IMR-90 (cell line): ENCODE measurements at regions of chr1 and their contacts with region 1.

Region 1: DNA sequence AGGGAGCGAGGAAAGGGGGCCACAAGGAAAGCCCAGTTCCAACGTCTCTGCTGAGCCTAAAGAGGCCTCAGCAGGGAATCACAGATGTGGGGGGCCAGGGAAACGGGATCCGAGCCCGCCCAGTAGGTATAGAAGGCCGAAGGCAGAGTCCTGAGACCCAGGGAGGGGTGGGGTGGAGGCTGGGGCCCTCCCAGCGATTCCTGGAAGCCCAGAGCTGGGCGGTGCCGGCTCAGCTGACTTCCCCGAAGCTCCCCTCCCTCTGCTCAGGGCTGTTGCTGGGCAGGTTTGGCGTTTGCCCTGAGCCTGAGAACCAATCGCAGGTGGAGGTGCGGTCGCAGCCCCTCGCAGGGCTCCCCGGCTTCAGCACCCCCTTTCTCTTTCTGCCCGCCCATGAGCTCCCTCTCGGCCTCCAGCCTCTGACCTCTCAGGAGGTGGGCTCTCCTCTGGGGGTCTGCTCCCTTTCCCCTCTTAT is 12.8 kb downstream of the ADAMTSL4 start:
- DNase-seq: peak; percentile 91
- ATAC-seq: peak; percentile 58
- H3K4me3 ChIP-seq: peak overlapping the region; percentile 24
- H3K27ac ChIP-seq: peak overlapping the region; percentile 96
- H3K4me1 ChIP-seq: peaks cover 31% of the 10 kb centered on the region
- H3K27me3 ChIP-seq: no peaks in the 10 kb centered on the region
- CTCF ChIP-seq: no peak
- POLR2A ChIP-seq: peak; percentile 46
- RAD21 ChIP-seq: no peak

Region 2: GRCh38 chr1:150366416-150367296 is 195.4 kb before region 1 on chr1:
- CTCF ChIA-PET with region 1: no interaction called
- POLR2A ChIA-PET with region 1: no interaction called
- dilution Hi-C with region 1: no loop called
- in situ Hi-C with region 1: no loop called
- intact Hi-C with region 1: no loop called
- DNase-seq: peak; percentile 48
- ATAC-seq: no peak
- H3K4me3 ChIP-seq: peak overlapping the region; percentile 59
- H3K27ac ChIP-seq: peak overlapping the region; percentile 15; the same call in 1 of the 2 replicates
- H3K4me1 ChIP-seq: no peaks in the 10 kb centered on the region
- H3K27me3 ChIP-seq: no peaks in the 10 kb centered on the region
- CTCF ChIP-seq: no peak
- POLR2A ChIP-seq: no peak
- RAD21 ChIP-seq: no peak

Region 3: DNA sequence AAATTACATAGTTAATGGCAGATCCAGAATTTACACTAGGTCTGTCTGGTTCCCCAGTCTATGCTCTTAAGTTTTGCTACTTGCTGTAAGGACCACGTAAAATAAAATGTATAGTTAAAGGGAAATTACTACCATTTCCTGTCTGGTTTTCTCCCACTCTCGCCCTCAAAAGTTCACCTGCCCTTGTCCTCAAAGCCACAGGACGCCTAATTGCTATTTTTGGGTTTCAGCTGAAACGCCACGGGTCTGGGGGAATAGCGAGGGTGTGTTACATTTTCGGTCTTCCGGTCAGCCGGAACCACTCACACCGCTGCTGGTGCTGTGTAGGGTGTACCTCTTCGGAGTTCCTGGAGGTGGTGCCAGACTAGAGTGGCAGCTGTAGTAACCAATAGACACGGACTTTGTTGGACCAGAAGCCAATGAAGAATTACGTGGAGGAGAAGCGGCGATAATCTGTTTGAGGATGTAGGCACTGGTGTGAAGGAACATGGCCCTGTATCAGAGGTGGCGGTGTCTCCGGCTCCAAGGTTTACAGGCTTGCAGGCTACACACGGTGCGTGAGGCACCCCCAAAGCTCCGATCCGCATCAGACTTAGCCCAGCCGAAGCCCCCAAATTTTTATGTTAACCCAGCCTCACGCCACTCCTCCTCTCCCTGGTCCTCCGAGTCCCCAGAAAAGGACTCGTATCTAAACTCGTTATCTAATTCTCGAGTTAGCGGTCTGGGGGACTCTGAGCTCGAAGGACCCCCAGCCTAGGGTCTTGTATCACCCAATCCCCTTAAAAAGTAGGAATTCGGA is 74.8 kb before region 1 on chr1 and contains the start of gene TARS2:
- CTCF ChIA-PET with region 1: no interaction called
- POLR2A ChIA-PET with region 1: no interaction called
- dilution Hi-C with region 1: no loop called
- in situ Hi-C with region 1: no loop called
- intact Hi-C with region 1: loop called (anchors 5 kb)
- DNase-seq: peak; percentile 99
- ATAC-seq: peak; percentile 100
- H3K4me3 ChIP-seq: peak within 1 kb of the TSS; percentile 66
- H3K27ac ChIP-seq: peak within 1 kb of the TSS; percentile 78
- H3K4me1 ChIP-seq: no peaks in the 10 kb centered on the region; the same call in 1 of the 2 replicates
- H3K27me3 ChIP-seq: no peaks in the 10 kb centered on the region
- CTCF ChIP-seq: 0 out of 2 replicates have a peak, but pooled peaks have one; percentile 12
- POLR2A ChIP-seq: peak; percentile 52; the same call in 1 of the 2 replicates
- RAD21 ChIP-seq: no peak
- total RNA-seq, gene TARS2: 10.9 and 12.2 TPM in 2 replicates

Region 4: GRCh38 chr1:150621497-150622302 is 59.7 kb after region 1 on chr1:
- CTCF ChIA-PET with region 1: interaction called, 17 read pairs
- POLR2A ChIA-PET with region 1: interaction called, 9 read pairs
- dilution Hi-C with region 1: no loop called
- in situ Hi-C with region 1: no loop called
- intact Hi-C with region 1: loop called (anchors 1 kb)
- DNase-seq: peak; percentile 79
- ATAC-seq: peak; percentile 57
- H3K4me3 ChIP-seq: no peak overlapping the region
- H3K27ac ChIP-seq: no peak overlapping the region; the same call in 1 of the 2 replicates
- H3K4me1 ChIP-seq: peaks cover 10% of the 10 kb centered on the region
- H3K27me3 ChIP-seq: no peaks in the 10 kb centered on the region
- CTCF ChIP-seq: peak; percentile 79
- POLR2A ChIP-seq: no peak
- RAD21 ChIP-seq: peak; percentile 66

Region 5: DNA sequence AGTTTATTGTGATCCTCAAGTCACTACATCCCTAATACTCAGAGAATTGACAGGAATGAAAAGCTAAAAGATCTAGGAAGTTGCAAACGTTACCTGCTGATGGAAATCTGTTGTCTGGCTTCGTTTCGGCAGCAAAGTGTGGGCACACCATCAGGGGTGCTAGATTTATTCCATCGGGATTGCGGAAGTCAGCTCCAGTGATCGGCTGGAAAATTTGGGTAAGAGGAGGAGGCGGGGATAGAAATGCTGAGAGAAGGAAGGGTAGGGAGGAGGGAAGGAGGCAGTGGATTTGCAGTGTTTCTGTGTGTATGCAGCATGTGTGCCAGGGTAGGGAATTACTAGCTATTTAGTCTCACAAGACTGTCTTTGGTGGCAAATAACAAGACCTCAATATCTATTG is 246.1 kb after region 1 on chr1 and contains the start of gene CTSK:
- CTCF ChIA-PET with region 1: interaction called, 3 read pairs
- POLR2A ChIA-PET with region 1: no interaction called
- dilution Hi-C with region 1: no loop called
- in situ Hi-C with region 1: loop called (anchors 10 kb)
- intact Hi-C with region 1: loop called (anchors 1 kb)
- DNase-seq: no peak
- ATAC-seq: no peak
- H3K4me3 ChIP-seq: no peak within 1 kb of the TSS
- H3K27ac ChIP-seq: peak within 1 kb of the TSS; percentile 3; the same call in 1 of the 2 replicates
- H3K4me1 ChIP-seq: peaks cover 10% of the 10 kb centered on the region
- H3K27me3 ChIP-seq: no peaks in the 10 kb centered on the region
- CTCF ChIP-seq: no peak
- POLR2A ChIP-seq: no peak
- RAD21 ChIP-seq: no peak
- total RNA-seq, gene CTSK: 4.7 and 7.7 TPM in 2 replicates

Region 6: GRCh38 chr1:150876119-150876454 is 314.1 kb after region 1 on chr1:
- CTCF ChIA-PET with region 1: no interaction called
- POLR2A ChIA-PET with region 1: no interaction called
- dilution Hi-C with region 1: no loop called
- in situ Hi-C with region 1: no loop called
- intact Hi-C with region 1: loop called (anchors 5 kb)
- DNase-seq: peak; percentile 49
- ATAC-seq: peak; percentile 64
- H3K4me3 ChIP-seq: peak overlapping the region; percentile 77
- H3K27ac ChIP-seq: peak overlapping the region; percentile 94
- H3K4me1 ChIP-seq: peaks cover 11% of the 10 kb centered on the region
- H3K27me3 ChIP-seq: no peaks in the 10 kb centered on the region
- CTCF ChIP-seq: no peak
- POLR2A ChIP-seq: no peak; the same call in 1 of the 2 replicates
- RAD21 ChIP-seq: peak; percentile 8; the same call in 1 of the 2 replicates

Region 7: DNA sequence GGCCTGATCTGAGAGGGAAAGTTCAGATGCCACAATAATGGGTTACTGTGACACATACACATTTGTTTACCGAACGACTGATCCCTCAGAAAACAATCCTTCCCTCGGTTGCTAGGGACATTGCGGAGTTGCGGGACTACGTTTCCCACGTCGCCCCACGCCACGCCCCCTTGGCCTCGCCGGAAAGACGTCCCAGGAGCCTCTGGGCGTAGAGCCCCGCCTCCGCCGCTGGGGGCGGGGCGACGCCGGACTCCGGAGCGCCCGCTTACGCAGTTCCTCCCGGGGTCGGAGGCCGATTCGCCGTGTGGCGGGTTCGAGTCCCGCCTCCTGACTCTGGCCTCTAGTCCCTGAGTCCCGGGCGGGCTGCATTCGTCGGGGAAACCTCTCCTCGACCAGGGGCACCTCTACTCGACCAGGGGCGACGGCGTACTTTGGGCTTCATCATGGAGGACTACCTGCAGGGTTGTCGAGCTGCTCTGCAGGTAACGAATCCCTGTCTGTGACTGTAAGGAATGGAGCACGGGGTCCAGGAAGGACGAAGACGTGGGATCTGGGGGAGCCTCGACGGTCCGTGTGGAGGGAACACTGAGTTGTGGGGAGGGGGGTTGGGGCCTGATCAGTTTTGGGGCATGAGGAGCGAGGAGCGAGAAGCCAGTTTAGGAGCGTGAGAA is 446.3 kb after region 1 on chr1 and contains the start of gene PRUNE1:
- CTCF ChIA-PET with region 1: interaction called, 6 read pairs
- POLR2A ChIA-PET with region 1: no interaction called
- dilution Hi-C with region 1: no loop called
- in situ Hi-C with region 1: no loop called
- intact Hi-C with region 1: loop called (anchors 10 kb)
- DNase-seq: peak; percentile 94
- ATAC-seq: peak; percentile 90
- H3K4me3 ChIP-seq: peak within 1 kb of the TSS; percentile 79
- H3K27ac ChIP-seq: peak within 1 kb of the TSS; percentile 76
- H3K4me1 ChIP-seq: peaks cover 4% of the 10 kb centered on the region; the same call in 1 of the 2 replicates
- H3K27me3 ChIP-seq: no peaks in the 10 kb centered on the region
- CTCF ChIP-seq: no peak
- POLR2A ChIP-seq: peak; percentile 37
- RAD21 ChIP-seq: no peak
- total RNA-seq, gene PRUNE1: 7.9 and 8.6 TPM in 2 replicates